ENCODE measurements at regions of chr16 and their contacts with region 1.

Region 1: DNA sequence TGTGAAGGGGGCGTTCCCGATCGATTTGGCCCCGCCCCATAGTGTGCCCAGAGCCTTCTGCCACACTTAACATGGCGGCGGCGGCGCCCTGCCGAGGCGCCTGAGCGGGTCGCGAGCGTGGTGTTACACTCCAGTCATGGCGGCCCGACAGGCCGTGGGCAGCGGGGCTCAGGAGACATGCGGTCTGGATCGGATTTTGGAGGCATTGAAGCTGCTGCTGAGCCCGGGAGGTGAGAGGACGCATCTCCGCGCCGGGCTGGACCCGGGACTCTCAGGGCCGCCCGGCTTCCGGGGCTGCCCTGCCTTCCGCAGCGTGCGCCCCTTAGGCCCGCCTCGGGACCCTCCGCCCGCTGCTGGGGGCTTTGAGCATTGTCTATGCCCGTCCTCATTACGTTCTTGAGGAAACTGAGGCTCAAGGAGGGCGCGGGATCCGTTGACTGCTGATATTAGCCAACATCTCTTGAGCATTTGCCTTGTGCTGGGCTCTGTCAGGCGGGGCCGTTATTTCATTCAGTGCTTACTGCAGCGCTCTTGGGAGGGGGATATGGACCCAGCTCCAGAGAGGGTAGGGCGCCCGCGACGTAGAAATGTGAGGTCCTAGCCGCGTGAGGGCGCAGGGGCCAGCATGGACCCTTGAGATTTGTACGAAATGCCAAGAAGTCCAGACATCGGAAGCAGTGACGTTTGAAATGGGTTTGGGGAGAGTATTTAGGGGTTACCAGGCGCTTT is at the start of gene TANGO6:
- DNase-seq: peak; percentile 95
- ATAC-seq: peak; percentile 93
- H3K4me3 Mint-ChIP-seq: peak within 1 kb of the TSS; percentile 84
- H3K27ac Mint-ChIP-seq: peak within 1 kb of the TSS; percentile 91
- H3K4me1 Mint-ChIP-seq: peaks cover 27% of the 10 kb centered on the region
- H3K27me3 Mint-ChIP-seq: no peaks in the 10 kb centered on the region
- total RNA-seq, gene TANGO6: 29.7 to 31.2 TPM

Region 2: GRCh38 chr16:68538880-68539701 is 304.6 kb before region 1 on chr16 and contains the start of gene ZFP90:
- CTCF ChIA-PET with region 1: interaction called, 3 read pairs
- POLR2A ChIA-PET with region 1: interaction called, 3 read pairs
- intact Hi-C with region 1: loop called in 1 of 2 experiments (anchors 1 kb)
- DNase-seq: peak; percentile 93
- ATAC-seq: peak; percentile 96
- H3K4me3 Mint-ChIP-seq: peak within 1 kb of the TSS; percentile 89
- H3K27ac Mint-ChIP-seq: peak within 1 kb of the TSS; percentile 98
- H3K4me1 Mint-ChIP-seq: peaks cover 16% of the 10 kb centered on the region
- H3K27me3 Mint-ChIP-seq: no peaks in the 10 kb centered on the region
- total RNA-seq, gene ZFP90: 31.4 to 31.6 TPM

Region 3: GRCh38 chr16:68704232-68704867 is 139.3 kb before region 1 on chr16:
- CTCF ChIA-PET with region 1: no interaction called
- POLR2A ChIA-PET with region 1: no interaction called
- intact Hi-C with region 1: loop called in 1 of 2 experiments (anchors 1 kb)
- DNase-seq: peak; percentile 83
- ATAC-seq: peak; percentile 91
- H3K4me3 Mint-ChIP-seq: no peak overlapping the region
- H3K27ac Mint-ChIP-seq: peak overlapping the region; percentile 39
- H3K4me1 Mint-ChIP-seq: peaks cover 5% of the 10 kb centered on the region
- H3K27me3 Mint-ChIP-seq: peaks cover 3% of the 10 kb centered on the region

Region 4: GRCh38 chr16:68961778-68962402 is 118.2 kb after region 1 on chr16:
- CTCF ChIA-PET with region 1: no interaction called
- POLR2A ChIA-PET with region 1: no interaction called
- intact Hi-C with region 1: no loop called
- DNase-seq: no peak
- ATAC-seq: no peak
- H3K4me3 Mint-ChIP-seq: no peak overlapping the region
- H3K27ac Mint-ChIP-seq: no peak overlapping the region
- H3K4me1 Mint-ChIP-seq: no peaks in the 10 kb centered on the region
- H3K27me3 Mint-ChIP-seq: no peaks in the 10 kb centered on the region

Region 5: GRCh38 chr16:69057400-69058378 is 214.0 kb after region 1 on chr16:
- CTCF ChIA-PET with region 1: no interaction called
- POLR2A ChIA-PET with region 1: no interaction called
- intact Hi-C with region 1: no loop called
- DNase-seq: no peak
- ATAC-seq: no peak
- H3K4me3 Mint-ChIP-seq: no peak overlapping the region
- H3K27ac Mint-ChIP-seq: no peak overlapping the region
- H3K4me1 Mint-ChIP-seq: no peaks in the 10 kb centered on the region
- H3K27me3 Mint-ChIP-seq: no peaks in the 10 kb centered on the region